ENCODE measurements at regions of chr19 and their contacts with region 1.

Region 1: DNA sequence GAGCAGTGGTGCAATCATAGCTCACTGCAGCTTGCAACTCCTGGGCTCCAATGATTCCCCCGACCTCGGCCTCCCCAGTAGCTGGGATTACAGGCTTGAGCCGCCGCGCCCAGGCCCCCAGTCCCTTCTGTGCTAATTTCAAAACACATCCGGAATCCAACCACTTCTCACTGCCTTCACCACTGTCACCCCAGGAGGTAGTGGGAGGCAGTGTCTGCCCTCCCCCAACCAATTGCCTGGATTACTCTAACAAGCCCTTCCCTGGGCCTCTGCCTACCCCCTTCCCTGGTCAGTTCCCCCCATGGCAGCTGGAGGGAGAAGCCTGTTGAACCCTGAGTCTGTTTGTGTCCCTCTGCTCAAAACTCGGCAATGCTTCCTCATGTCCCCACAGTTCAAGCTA is 2.3 kb downstream of the PRAM1 start:
- DNase-seq: peak in 4 of 42 donors; percentile 13 to 44 (median 16)

Region 2: GRCh38 chr19:8444645-8445487 is 55.3 kb before region 1 on chr19 and contains the start of gene HNRNPM:
- intact Hi-C with region 1: loop called (anchors 5 kb)
- DNase-seq: peak; percentile 98 to 100 (median 100)

Region 3: GRCh38 chr19:8638078-8638619 is 138.0 kb after region 1 on chr19:
- intact Hi-C with region 1: no loop called
- DNase-seq: peak in 20 of 42 donors; percentile 7 to 51 (median 19)

Region 4: GRCh38 chr19:8986296-8986695 is 486.1 kb after region 1 on chr19:
- intact Hi-C with region 1: no loop called
- DNase-seq: no peak

Measured in head of caudate nucleus (tissue), 42 donors.